Activated CD4-positive, alpha-beta T cell treated with anti-CD3 and anti-CD28 coated beads for 36 hours (primary cell): ENCODE measurements at regions of chr18 and their contacts with region 1.

Region 1: GRCh38 chr18:54983041-54983686 is 23.9 kb upstream of the CCDC68 start:
- DNase-seq: no peak
- ATAC-seq: peak; percentile 66
- H3K4me3 Mint-ChIP-seq: no peak overlapping the region
- H3K27ac Mint-ChIP-seq: no peak overlapping the region
- H3K4me1 Mint-ChIP-seq: no peaks in the 10 kb centered on the region
- H3K27me3 Mint-ChIP-seq: peaks cover 2% of the 10 kb centered on the region

Region 2: GRCh38 chr18:54392543-54393023 is 590.6 kb before region 1 on chr18:
- CTCF ChIA-PET with region 1: interaction called, 3 read pairs
- POLR2A ChIA-PET with region 1: no interaction called
- intact Hi-C with region 1: loop called (anchors 2 kb)
- DNase-seq: no peak
- ATAC-seq: peak; percentile 59
- H3K4me3 Mint-ChIP-seq: no peak overlapping the region
- H3K27ac Mint-ChIP-seq: no peak overlapping the region
- H3K4me1 Mint-ChIP-seq: peaks cover 6% of the 10 kb centered on the region
- H3K27me3 Mint-ChIP-seq: peaks cover 6% of the 10 kb centered on the region

Region 3: GRCh38 chr18:54444319-54444914 is 538.7 kb before region 1 on chr18:
- CTCF ChIA-PET with region 1: interaction called, 3 read pairs
- POLR2A ChIA-PET with region 1: no interaction called
- intact Hi-C with region 1: loop called (anchors 1 kb)
- DNase-seq: peak; percentile 71
- ATAC-seq: peak; percentile 68
- H3K4me3 Mint-ChIP-seq: no peak overlapping the region
- H3K27ac Mint-ChIP-seq: no peak overlapping the region
- H3K4me1 Mint-ChIP-seq: no peaks in the 10 kb centered on the region
- H3K27me3 Mint-ChIP-seq: peaks cover 10% of the 10 kb centered on the region

Region 4: GRCh38 chr18:54679318-54680149 is 303.6 kb before region 1 on chr18:
- CTCF ChIA-PET with region 1: interaction called, 10 read pairs
- POLR2A ChIA-PET with region 1: no interaction called
- intact Hi-C with region 1: loop called (anchors 1 kb)
- DNase-seq: no peak
- ATAC-seq: peak; percentile 61
- H3K4me3 Mint-ChIP-seq: no peak overlapping the region
- H3K27ac Mint-ChIP-seq: no peak overlapping the region
- H3K4me1 Mint-ChIP-seq: peaks cover 2% of the 10 kb centered on the region
- H3K27me3 Mint-ChIP-seq: peaks cover 2% of the 10 kb centered on the region

Region 5: GRCh38 chr18:55275039-55275901 is 292.1 kb after region 1 on chr18:
- CTCF ChIA-PET with region 1: no interaction called
- POLR2A ChIA-PET with region 1: no interaction called
- intact Hi-C with region 1: no loop called
- DNase-seq: no peak
- ATAC-seq: no peak
- H3K4me3 Mint-ChIP-seq: no peak overlapping the region
- H3K27ac Mint-ChIP-seq: no peak overlapping the region
- H3K4me1 Mint-ChIP-seq: no peaks in the 10 kb centered on the region
- H3K27me3 Mint-ChIP-seq: no peaks in the 10 kb centered on the region